CD4-positive, alpha-beta T cell (primary cell): ENCODE measurements at regions of chr16 and their contacts with region 1.

Region 1: DNA sequence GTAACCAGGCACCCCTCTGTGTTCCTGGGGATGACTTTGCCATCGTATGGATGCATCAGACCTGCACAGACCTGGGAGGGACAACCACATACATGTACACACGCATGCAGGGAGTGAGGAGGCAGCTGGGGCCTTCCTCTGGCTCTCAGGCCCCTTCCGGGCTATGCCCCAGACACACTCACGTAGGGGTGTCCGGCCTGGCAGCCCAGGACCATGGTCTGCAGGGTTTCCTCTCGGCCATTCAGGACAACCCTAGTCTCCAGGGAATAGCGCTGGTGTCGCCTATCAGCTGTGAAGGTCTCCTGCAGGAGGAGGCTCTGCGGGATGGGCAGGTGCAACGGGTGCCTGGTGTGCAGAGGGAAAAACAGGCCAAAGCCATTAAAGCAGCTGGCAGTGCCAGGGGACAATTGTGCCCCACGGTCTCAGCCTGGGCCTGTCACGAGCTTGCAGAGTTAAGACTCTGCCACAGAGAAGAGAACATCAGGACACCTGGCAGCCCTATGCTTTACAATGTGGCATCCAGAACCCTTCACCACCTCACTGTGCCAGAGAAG is 101.4 kb downstream of the RMI2 start:
- DNase-seq: no peak
- ATAC-seq: no peak
- H3K4me3 ChIP-seq: no peak overlapping the region
- H3K4me3 Mint-ChIP-seq: no peak overlapping the region
- H3K27ac ChIP-seq: no peak overlapping the region
- H3K27ac Mint-ChIP-seq: no peak overlapping the region
- H3K4me1 ChIP-seq: no peaks in the 10 kb centered on the region
- H3K4me1 Mint-ChIP-seq: no peaks in the 10 kb centered on the region
- H3K27me3 ChIP-seq: no peaks in the 10 kb centered on the region
- H3K27me3 Mint-ChIP-seq: no peaks in the 10 kb centered on the region
- CTCF ChIP-seq: no peak

Region 2: DNA sequence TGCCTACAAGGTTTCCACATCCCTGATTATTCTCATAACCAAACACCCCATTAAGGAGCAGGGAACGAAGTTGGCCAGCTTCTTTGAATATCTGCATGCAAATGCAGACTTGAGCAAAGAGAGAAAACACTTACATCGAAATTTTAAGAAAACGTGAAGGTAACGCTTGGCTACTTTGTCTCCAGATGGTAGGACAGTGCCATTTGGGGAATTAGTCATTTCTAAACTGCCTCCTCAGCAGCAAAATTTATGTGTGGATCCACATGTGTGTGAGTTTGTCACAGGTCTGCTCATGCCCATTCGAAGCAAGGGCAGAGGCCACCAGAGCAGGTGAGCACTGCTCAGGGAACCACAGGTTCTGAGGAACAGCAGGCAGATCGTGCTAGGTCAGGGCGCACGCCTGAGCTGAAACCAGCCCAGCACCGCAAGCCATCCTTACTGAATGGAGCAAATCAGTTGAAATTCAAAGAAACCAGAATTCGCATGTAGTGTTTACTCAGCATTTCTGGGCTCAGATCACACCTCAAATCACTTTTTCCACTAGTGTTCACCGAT is 270.8 kb before region 1 on chr16:
- CTCF ChIA-PET with region 1: no interaction called
- POLR2A ChIA-PET with region 1: no interaction called
- intact Hi-C with region 1: loop called in 1 of 2 experiments (anchors 10 kb)
- DNase-seq: no peak
- ATAC-seq: no peak
- H3K4me3 ChIP-seq: no peak overlapping the region
- H3K4me3 Mint-ChIP-seq: no peak overlapping the region
- H3K27ac ChIP-seq: no peak overlapping the region
- H3K27ac Mint-ChIP-seq: no peak overlapping the region
- H3K4me1 ChIP-seq: no peaks in the 10 kb centered on the region
- H3K4me1 Mint-ChIP-seq: peaks cover 7% of the 10 kb centered on the region
- H3K27me3 ChIP-seq: no peaks in the 10 kb centered on the region
- H3K27me3 Mint-ChIP-seq: no peaks in the 10 kb centered on the region
- CTCF ChIP-seq: no peak

Region 3: GRCh38 chr16:11470676-11471415 is 24.2 kb after region 1 on chr16:
- CTCF ChIA-PET with region 1: no interaction called
- POLR2A ChIA-PET with region 1: no interaction called
- intact Hi-C with region 1: no loop called
- DNase-seq: no peak
- ATAC-seq: no peak
- H3K4me3 ChIP-seq: no peak overlapping the region
- H3K4me3 Mint-ChIP-seq: no peak overlapping the region
- H3K27ac ChIP-seq: no peak overlapping the region
- H3K27ac Mint-ChIP-seq: no peak overlapping the region
- H3K4me1 ChIP-seq: no peaks in the 10 kb centered on the region
- H3K4me1 Mint-ChIP-seq: no peaks in the 10 kb centered on the region
- H3K27me3 ChIP-seq: no peaks in the 10 kb centered on the region
- H3K27me3 Mint-ChIP-seq: no peaks in the 10 kb centered on the region
- CTCF ChIP-seq: no peak

Region 4: DNA sequence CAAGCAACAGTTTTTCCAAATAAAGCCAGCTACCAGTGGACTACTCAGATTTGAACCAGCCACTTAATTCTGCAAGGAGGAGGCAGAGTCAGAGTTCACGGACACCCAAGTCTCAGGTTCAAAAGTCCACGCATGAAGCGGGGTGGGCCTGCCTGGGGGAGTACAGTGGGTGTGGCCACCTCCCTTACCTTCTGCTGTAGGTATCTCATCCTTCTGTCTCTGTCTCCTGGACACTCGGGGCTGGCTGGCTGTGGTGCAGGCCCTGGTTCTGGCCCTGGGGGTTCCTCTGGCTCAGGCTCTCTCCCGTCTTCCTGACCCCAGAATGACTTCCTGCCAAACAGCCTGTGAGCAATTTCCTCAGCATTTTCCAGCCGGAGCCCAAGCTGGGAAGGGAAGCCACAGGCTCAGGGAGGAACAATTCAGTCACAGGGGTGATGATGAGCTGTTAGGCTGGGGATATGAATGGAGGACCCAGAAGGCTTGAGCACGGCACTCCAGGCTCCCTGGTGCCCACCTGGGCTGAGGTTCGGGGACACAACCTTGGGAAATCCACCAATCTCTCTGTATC is 38.1 kb after region 1 on chr16:
- CTCF ChIA-PET with region 1: no interaction called
- POLR2A ChIA-PET with region 1: no interaction called
- intact Hi-C with region 1: no loop called
- DNase-seq: no peak
- ATAC-seq: no peak
- H3K4me3 ChIP-seq: no peak overlapping the region
- H3K4me3 Mint-ChIP-seq: no peak overlapping the region
- H3K27ac ChIP-seq: no peak overlapping the region
- H3K27ac Mint-ChIP-seq: no peak overlapping the region
- H3K4me1 ChIP-seq: no peaks in the 10 kb centered on the region
- H3K4me1 Mint-ChIP-seq: no peaks in the 10 kb centered on the region
- H3K27me3 ChIP-seq: no peaks in the 10 kb centered on the region
- H3K27me3 Mint-ChIP-seq: no peaks in the 10 kb centered on the region
- CTCF ChIP-seq: no peak

Region 5: GRCh38 chr16:11546608-11547061 is 100.0 kb after region 1 on chr16:
- CTCF ChIA-PET with region 1: no interaction called
- POLR2A ChIA-PET with region 1: no interaction called
- intact Hi-C with region 1: no loop called
- DNase-seq: no peak
- ATAC-seq: no peak
- H3K4me3 ChIP-seq: no peak overlapping the region
- H3K4me3 Mint-ChIP-seq: no peak overlapping the region
- H3K27ac ChIP-seq: no peak overlapping the region
- H3K27ac Mint-ChIP-seq: peak overlapping the region; percentile 78
- H3K4me1 ChIP-seq: no peaks in the 10 kb centered on the region
- H3K4me1 Mint-ChIP-seq: no peaks in the 10 kb centered on the region
- H3K27me3 ChIP-seq: no peaks in the 10 kb centered on the region
- H3K27me3 Mint-ChIP-seq: no peaks in the 10 kb centered on the region
- CTCF ChIP-seq: no peak